ENCODE measurements at regions of chr4 and their contacts with region 1.

Region 1: GRCh38 chr4:176277162-176277904 is 8.3 kb upstream of the ASB5 start:
- DNase-seq: peak; percentile 44
- H3K4me3 ChIP-seq: no peak overlapping the region
- H3K27ac ChIP-seq: no peak overlapping the region
- H3K4me1 ChIP-seq: no peaks in the 10 kb centered on the region
- H3K27me3 ChIP-seq: peaks cover 0 to 2% of the 10 kb centered on the region in 2 experiments
- CTCF ChIP-seq: peak in 1 of 2 donors; percentile 53
- POLR2A ChIP-seq: no peak

Region 2: DNA sequence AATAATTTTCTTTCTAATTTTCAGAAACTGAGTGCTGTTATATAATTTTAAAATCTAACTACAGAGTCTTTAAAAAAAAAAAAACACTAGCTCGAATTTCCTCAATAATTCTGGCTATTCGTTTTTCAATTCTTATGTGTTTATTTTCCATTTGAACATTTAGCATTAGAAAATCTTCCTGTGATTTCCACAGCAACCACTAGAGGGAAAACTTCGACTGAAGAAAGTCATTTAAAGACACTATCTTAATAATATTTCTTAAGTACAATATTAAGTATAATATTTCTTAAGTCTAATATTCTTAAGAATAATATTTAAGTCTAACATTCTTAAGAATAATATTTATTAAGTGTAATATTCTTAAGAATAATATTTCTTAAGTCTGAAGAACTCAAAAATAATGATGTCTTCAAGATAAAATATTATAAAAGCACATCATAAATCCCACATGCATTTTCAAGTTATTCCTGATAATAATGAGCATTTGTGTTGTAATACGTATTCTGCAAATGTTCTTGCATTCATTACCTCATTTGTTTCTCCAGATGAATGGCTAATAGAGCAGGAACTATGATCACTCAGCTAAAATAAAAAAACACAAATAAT is 330.1 kb before region 1 on chr4:
- CTCF ChIA-PET with region 1: no interaction called
- POLR2A ChIA-PET with region 1: no interaction called
- dilution Hi-C with region 1: no loop called
- intact Hi-C with region 1: loop called (anchors 2 kb)
- DNase-seq: peak; percentile 54
- H3K4me3 ChIP-seq: peak overlapping the region in 1 of 3 experiments; percentile 39
- H3K27ac ChIP-seq: no peak overlapping the region
- H3K4me1 ChIP-seq: peaks cover 3% of the 10 kb centered on the region
- H3K27me3 ChIP-seq: no peaks in the 10 kb centered on the region
- CTCF ChIP-seq: peak; percentile 28 to 37
- POLR2A ChIP-seq: no peak

Region 3: GRCh38 chr4:176150356-176150682 is 127.0 kb before region 1 on chr4:
- CTCF ChIA-PET with region 1: interaction called, 27 read pairs
- POLR2A ChIA-PET with region 1: no interaction called
- dilution Hi-C with region 1: no loop called
- intact Hi-C with region 1: loop called (anchors 5 kb)
- DNase-seq: peak; percentile 20
- H3K4me3 ChIP-seq: no peak overlapping the region
- H3K27ac ChIP-seq: no peak overlapping the region
- H3K4me1 ChIP-seq: no peaks in the 10 kb centered on the region
- H3K27me3 ChIP-seq: no peaks in the 10 kb centered on the region
- CTCF ChIP-seq: no peak
- POLR2A ChIP-seq: no peak

Region 4: DNA sequence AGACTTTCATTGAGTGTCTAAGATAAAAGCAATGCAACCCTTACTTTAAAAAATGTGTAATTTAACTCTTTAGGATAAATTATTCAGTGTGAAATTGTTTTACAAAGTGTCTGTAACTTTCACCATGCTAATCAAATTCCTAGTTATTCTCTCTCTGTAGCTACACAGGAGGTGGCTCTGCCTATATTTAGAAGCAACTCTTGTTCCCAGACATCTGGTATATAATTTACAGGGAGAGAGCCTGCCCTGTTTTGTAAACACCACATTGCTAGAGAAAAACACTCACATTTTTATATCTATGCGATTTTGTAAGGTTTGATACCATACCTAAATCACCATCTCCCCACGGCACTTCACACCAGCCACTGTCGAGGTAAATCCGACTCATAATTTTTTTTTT is 46.5 kb before region 1 on chr4:
- CTCF ChIA-PET with region 1: no interaction called
- POLR2A ChIA-PET with region 1: no interaction called
- dilution Hi-C with region 1: no loop called
- intact Hi-C with region 1: no loop called
- DNase-seq: no peak
- H3K4me3 ChIP-seq: no peak overlapping the region
- H3K27ac ChIP-seq: no peak overlapping the region
- H3K4me1 ChIP-seq: no peaks in the 10 kb centered on the region
- H3K27me3 ChIP-seq: no peaks in the 10 kb centered on the region
- CTCF ChIP-seq: no peak
- POLR2A ChIP-seq: no peak

Measured in endothelial cell of umbilical vein (primary cell).